GM13976 (cell line): ENCODE measurements at regions of chr17 and their contacts with region 1.

Region 1: DNA sequence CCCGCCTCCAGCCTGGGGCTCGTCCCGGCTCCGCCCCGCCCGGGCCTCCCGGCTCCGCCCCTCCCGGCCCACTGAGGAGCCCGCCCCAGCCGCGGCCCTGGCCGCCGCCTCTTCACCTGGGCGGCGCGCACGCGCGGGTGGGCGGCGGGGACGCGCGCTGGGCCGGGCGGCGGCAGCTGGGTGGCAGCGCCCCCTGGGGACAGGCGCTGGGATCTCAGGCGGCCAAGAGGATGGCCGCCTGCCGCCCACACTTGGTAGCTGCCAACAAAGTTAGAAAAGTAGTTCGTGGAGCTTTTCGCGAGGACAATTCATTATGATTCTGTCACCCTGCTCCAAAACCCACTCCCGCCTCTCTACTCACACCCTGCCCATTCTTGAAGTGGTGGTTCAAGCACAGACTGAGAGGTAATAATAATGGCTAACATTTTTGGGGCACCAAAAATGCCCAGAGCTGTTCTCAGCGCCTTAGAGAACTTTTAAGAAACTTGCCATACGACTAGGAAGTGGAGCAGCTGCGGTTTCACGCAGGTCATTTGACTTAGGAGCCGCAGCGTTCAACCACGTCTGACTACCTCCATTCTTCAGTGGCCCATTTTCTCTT is 340 bp upstream of the MYO1D start:
- DNase-seq: peak; percentile 96
- CTCF ChIP-seq: peak; percentile 93

Region 2: GRCh38 chr17:32783602-32784001 is 93.7 kb before region 1 on chr17:
- in situ Hi-C with region 1: loop called (anchors 5 kb)
- DNase-seq: peak; percentile 63
- CTCF ChIP-seq: peak; percentile 46

Region 3: GRCh38 chr17:32840241-32840640 is 37.0 kb before region 1 on chr17:
- in situ Hi-C with region 1: loop called (anchors 5 kb)
- DNase-seq: no peak
- CTCF ChIP-seq: no peak